ENCODE measurements at regions of chr5 and their contacts with region 1.

Region 1: GRCh38 chr5:149636851-149637246 is 55.6 kb downstream of the ARHGEF37 start:
- DNase-seq: peak; percentile 56 to 69 (median 59)
- H3K4me3 ChIP-seq: no peak overlapping the region
- H3K27ac ChIP-seq: no peak overlapping the region
- H3K4me1 ChIP-seq: peaks cover 0 to 29% (median 23%) of the 10 kb centered on the region in 4 experiments
- H3K27me3 ChIP-seq: no peaks in the 10 kb centered on the region

Region 2: DNA sequence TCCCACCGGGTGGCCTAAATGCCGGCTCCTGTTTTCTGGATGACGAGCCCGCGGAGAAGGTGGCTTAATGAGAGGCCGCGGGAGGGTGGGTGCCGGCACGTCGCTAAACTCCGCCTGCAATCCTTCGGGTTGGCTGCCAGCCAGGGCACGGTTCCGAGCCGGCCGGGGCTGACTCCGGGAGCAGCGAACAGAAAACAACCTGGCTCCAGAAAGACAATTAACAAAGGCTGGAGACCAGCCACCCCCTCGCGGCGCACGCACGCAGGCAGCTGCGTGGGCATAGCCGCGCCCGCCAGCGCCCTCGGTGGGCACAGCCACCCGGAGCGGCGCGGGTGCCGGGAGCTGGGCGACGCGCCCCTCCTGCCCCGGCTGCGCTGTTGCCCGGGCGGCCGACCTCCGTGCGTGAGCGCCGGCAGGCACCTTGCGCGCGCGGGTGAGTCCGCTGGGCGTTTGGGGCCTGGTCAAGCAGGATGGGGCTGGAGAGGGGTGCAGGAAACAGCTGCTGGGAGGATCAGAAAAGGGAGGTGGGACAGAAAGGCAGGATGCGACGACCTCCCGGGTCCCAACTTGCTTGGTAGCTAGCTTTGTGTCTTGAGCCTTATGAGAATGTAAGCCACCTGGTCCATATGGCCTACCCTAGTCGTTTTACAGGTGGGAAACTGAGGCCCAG is 55.5 kb before region 1 on chr5 and contains the start of gene ARHGEF37:
- CTCF ChIA-PET with region 1: no interaction called
- POLR2A ChIA-PET with region 1: no interaction called
- DNase-seq: peak; percentile 36 to 65 (median 53)
- H3K4me3 ChIP-seq: peak within 1 kb of the TSS; percentile 17 to 75 (median 60)
- H3K27ac ChIP-seq: no peak within 1 kb of the TSS
- H3K4me1 ChIP-seq: peaks cover 0 to 16% (median 10%) of the 10 kb centered on the region in 4 experiments
- H3K27me3 ChIP-seq: peaks cover 0 to 13% (median 5%) of the 10 kb centered on the region in 5 experiments

Region 3: DNA sequence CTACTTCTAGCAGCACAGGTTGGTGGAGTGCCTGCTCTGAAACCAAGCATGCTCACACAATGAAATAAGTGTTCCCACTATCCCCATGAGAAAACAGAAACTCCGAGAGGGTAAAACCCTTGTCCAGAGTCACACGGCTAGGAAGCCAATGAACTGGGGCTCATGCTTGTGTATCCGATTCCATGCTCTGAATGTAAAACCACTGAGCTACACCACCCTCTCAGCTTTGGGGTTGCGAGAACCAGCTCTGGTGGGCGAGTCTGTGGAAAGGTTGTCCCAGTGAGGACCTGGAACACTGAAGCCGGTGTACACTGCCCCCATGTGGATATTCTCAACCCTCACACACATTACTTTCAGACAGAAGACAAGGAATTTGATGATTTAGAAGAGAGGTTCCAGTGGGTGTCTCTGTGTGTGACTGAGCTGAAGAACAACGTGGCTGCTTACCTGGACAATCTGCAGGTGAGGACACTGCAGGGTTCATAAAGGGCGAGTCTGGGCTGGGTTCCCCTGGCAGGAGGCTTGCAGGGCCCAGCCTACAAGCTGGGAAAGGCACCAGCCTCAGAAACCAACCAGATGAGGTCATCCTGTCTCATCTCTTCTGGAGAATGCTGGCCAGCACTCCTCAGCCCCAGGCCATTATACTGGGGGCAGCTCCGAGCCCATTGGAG is 18.1 kb before region 1 on chr5:
- CTCF ChIA-PET with region 1: interaction called, 11 read pairs
- POLR2A ChIA-PET with region 1: no interaction called
- DNase-seq: peak; percentile 43 to 67 (median 61)
- H3K4me3 ChIP-seq: no peak overlapping the region
- H3K27ac ChIP-seq: no peak overlapping the region
- H3K4me1 ChIP-seq: no peaks in the 10 kb centered on the region
- H3K27me3 ChIP-seq: no peaks in the 10 kb centered on the region

Region 4: GRCh38 chr5:149828161-149828884 is 191.5 kb after region 1 on chr5:
- CTCF ChIA-PET with region 1: interaction called, 329 read pairs
- POLR2A ChIA-PET with region 1: interaction called, 3 read pairs
- DNase-seq: peak; percentile 85 to 92 (median 87)
- H3K4me3 ChIP-seq: no peak overlapping the region
- H3K27ac ChIP-seq: no peak overlapping the region
- H3K4me1 ChIP-seq: peaks cover 0 to 4% (median 0%) of the 10 kb centered on the region in 4 experiments
- H3K27me3 ChIP-seq: no peaks in the 10 kb centered on the region

Region 5: DNA sequence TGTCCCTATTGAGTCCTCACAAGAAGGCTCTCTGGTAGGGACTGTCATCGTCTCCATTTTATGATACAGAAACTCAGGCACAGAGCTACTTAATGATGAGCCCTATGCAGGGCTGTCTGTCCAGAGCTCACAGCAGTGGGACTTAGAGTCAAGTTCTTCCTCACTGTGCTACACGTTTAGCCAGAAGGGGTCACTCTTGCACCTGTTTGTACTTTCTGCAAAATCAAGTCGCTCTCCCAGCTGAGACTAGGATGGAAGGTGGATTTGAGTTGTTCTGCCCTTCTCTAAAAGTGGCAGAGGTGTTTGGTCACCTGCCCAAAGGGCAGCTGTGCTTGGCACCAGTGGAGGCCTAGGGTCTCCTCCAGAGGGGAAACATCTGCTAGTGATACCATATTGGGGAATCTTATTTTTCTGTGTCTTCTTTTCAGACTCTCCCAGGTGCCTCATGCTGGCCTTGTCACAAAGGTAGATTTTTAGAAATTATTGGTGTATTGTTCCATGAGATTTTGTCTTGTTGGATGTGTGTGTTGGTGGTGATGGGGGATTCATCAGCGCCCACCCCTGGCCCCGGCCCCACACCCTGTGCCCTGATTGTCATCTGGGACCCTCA is 197.5 kb after region 1 on chr5:
- CTCF ChIA-PET with region 1: interaction called, 329 read pairs
- POLR2A ChIA-PET with region 1: no interaction called
- DNase-seq: peak; percentile 88 to 95 (median 90)
- H3K4me3 ChIP-seq: no peak overlapping the region
- H3K27ac ChIP-seq: no peak overlapping the region
- H3K4me1 ChIP-seq: no peaks in the 10 kb centered on the region
- H3K27me3 ChIP-seq: no peaks in the 10 kb centered on the region

Region 6: DNA sequence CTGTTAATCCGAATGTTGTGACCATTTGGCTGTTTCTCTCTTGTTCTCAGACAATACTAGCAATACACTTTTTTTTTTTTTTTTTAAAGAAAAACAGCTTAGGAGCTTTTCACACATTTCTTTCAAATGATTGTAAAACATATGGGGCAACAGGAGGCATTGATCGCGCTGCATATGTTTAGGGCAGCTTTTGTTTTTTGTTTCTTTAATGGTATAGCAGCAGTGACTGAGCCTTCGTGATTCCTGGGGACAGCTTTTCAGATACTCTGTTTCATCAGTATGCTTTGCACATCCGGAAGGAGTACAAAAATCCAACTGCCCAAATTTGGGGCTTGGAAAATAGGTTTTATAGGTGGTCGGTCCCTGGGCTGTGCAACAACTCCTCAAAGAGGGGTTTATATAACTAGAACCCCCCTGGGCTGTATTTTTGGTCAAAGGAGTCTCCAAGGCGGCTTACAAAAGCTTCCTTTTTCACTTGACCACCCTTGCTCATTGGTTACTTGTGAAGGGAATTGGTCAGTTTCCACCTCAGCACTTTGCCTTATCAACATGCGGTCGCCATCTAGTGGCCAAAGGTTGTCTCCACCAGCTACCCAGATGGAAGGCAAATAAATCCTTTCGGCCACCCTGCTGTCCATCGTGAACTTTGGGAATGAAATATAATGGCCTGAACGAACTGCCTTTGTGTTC is 215.9 kb after region 1 on chr5:
- CTCF ChIA-PET with region 1: interaction called, 14 read pairs
- POLR2A ChIA-PET with region 1: no interaction called
- DNase-seq: peak; percentile 18 to 47 (median 35)
- H3K4me3 ChIP-seq: no peak overlapping the region
- H3K27ac ChIP-seq: no peak overlapping the region
- H3K4me1 ChIP-seq: peaks cover 0 to 10% (median 6%) of the 10 kb centered on the region in 4 experiments
- H3K27me3 ChIP-seq: no peaks in the 10 kb centered on the region